Activated B cell treated with CpG ODN at 0.5 μM for 24 hours (primary cell): ENCODE measurements at regions of chr11 and their contacts with region 1.

Region 1: DNA sequence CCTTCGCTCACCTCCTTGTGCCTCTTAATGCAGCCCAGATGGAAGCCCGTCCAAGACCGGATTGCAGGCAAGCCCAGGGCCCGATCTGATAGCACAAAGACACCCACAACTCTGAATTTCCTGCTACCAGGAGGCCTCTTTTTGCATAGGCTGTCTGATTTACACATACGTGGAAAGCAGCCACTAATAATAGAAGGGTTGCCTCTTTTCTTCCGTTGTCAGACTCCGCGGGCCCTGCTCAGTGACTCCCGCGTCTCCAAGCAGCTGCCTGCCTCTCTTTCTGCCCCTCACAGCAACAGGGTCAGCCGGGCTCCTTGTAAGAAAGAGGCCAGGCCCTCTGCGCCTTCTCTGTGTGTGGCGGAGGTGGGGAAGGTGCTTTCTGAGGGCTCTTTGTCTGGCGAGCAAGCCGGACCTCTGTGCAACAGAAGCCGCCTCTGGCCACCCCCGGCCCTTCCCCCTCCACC is 26.7 kb downstream of the FLI1 start:
- DNase-seq: peak; percentile 42
- ATAC-seq: peak; percentile 56
- H3K4me3 Mint-ChIP-seq: peak overlapping the region; percentile 87
- H3K27ac Mint-ChIP-seq: peak overlapping the region; percentile 98
- H3K4me1 Mint-ChIP-seq: peaks cover 99% of the 10 kb centered on the region
- H3K27me3 Mint-ChIP-seq: no peaks in the 10 kb centered on the region
- CTCF ChIP-seq: no peak

Region 2: GRCh38 chr11:128686745-128687177 is 33.8 kb before region 1 on chr11:
- CTCF ChIA-PET with region 1: interaction called, 4 read pairs
- POLR2A ChIA-PET with region 1: interaction called, 11 read pairs
- intact Hi-C with region 1: no loop called
- DNase-seq: peak; percentile 41
- ATAC-seq: peak; percentile 63
- H3K4me3 Mint-ChIP-seq: peak overlapping the region; percentile 84
- H3K27ac Mint-ChIP-seq: no peak overlapping the region
- H3K4me1 Mint-ChIP-seq: peaks cover 45% of the 10 kb centered on the region
- H3K27me3 Mint-ChIP-seq: peaks cover 25% of the 10 kb centered on the region
- CTCF ChIP-seq: no peak

Region 3: DNA sequence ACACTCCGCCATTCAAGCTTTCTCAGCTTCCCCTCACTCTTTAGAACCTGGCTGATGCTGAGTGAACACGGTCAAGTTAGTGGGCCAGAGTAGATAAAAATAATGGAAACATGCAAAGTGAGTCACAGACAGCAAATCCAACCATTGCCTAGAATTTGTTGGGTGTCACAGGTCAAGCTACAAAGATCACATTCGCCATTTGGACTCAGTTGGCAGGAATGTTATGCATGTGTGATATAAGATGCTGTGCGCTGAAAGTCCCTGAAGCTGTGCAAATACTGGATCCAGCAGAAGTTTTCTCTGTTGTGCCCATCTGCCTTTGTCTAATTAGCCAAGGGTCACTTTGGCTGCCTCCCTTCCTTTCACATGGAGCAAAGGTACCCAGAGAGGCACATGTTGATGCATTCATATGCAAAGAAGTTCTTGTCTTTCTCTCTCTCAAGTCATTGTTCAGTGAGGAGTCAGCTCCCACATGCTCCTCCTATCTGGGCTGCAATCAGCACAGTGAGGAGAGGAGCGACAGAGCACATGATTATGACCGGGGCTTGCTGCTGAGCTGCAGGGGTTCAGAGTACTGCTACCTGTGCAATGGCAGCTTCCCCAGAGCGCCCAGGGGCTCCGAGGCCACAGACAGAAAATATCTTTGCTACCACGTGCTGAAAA is 13.0 kb after region 1 on chr11:
- CTCF ChIA-PET with region 1: interaction called, 5 read pairs
- POLR2A ChIA-PET with region 1: interaction called, 79 read pairs
- intact Hi-C with region 1: loop called (anchors 1 kb)
- DNase-seq: no peak
- ATAC-seq: peak; percentile 17
- H3K4me3 Mint-ChIP-seq: peak overlapping the region; percentile 71
- H3K27ac Mint-ChIP-seq: peak overlapping the region; percentile 98
- H3K4me1 Mint-ChIP-seq: peaks cover 99% of the 10 kb centered on the region
- H3K27me3 Mint-ChIP-seq: no peaks in the 10 kb centered on the region
- CTCF ChIP-seq: no peak

Region 4: GRCh38 chr11:129023970-129024676 is 303.6 kb after region 1 on chr11:
- CTCF ChIA-PET with region 1: no interaction called
- POLR2A ChIA-PET with region 1: no interaction called
- intact Hi-C with region 1: no loop called
- DNase-seq: no peak
- ATAC-seq: no peak
- H3K4me3 Mint-ChIP-seq: no peak overlapping the region
- H3K27ac Mint-ChIP-seq: no peak overlapping the region
- H3K4me1 Mint-ChIP-seq: peaks cover 8% of the 10 kb centered on the region
- H3K27me3 Mint-ChIP-seq: peaks cover 6% of the 10 kb centered on the region
- CTCF ChIP-seq: no peak